Tibial artery (tissue), 4 donors: ENCODE measurements at regions of chr7 and their contacts with region 1.

Region 1: GRCh38 chr7:80699045-80699638 is 60.7 kb downstream of the CD36 start:
- DNase-seq: no peak
- H3K4me3 ChIP-seq: no peak overlapping the region
- H3K27ac ChIP-seq: peak overlapping the region in 1 of 2 donors; percentile 27
- H3K4me1 ChIP-seq: peaks cover 0 to 11% (median 2%) of the 10 kb centered on the region in 4 donors
- H3K27me3 ChIP-seq: no peaks in the 10 kb centered on the region
- CTCF ChIP-seq: peak; percentile 58 to 85

Region 2: GRCh38 chr7:81469869-81470723 is 771.0 kb after region 1 on chr7:
- intact Hi-C with region 1: loop called (anchors 2 kb)
- DNase-seq: peak; percentile 38 to 81
- H3K4me3 ChIP-seq: no peak overlapping the region
- H3K27ac ChIP-seq: no peak overlapping the region
- H3K4me1 ChIP-seq: peaks cover 0 to 8% (median 2%) of the 10 kb centered on the region in 4 donors
- H3K27me3 ChIP-seq: no peaks in the 10 kb centered on the region
- CTCF ChIP-seq: peak; percentile 55 to 65